HepG2 (cell line): ENCODE measurements at regions of chr21 and their contacts with region 1.

Region 1: DNA sequence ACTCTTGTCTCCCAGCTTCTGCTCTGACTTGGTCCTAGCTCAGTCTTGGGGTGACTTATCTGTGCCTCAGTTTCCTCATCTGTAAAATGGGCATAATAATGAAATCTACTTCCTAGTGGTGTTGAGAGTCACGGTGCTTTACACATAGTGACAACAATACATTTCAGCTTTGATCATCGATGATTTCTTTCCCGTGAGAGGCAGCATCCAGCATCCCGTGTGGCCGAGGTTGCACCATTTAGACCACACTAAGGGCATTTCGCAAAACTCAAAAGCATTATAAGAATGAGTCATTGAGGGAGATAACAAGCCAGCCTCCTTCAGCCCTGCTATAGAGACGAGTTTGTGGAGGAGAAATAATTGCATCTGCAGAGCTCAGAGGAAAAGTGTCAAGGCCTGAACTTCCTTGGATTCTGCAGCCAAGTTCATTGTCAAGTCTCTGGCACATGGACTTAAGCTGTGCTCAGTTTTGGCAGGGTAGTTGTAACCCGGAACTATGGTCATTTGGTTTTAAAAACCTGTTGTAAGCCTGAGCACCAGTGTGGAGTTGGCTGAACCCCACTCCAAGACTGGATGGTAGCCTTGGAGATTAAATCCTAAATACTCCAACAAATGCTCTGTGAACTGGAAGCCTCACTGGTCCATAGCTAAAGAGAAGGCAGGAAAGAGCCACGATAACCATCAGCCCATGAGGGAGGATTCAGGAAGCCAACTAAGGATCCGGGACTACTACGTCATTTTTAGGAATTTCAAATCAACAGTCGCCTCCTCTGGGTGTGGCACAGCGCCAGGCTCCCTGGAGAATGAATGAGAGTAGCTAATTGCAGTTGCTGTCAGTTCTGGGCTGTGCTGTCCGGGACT is 64.2 kb downstream of the TCP10L start:
- DNase-seq: no peak
- ATAC-seq: no peak
- H3K4me3 ChIP-seq: no peak overlapping the region
- H3K27ac ChIP-seq: no peak overlapping the region
- H3K4me1 ChIP-seq: peaks cover 39% of the 10 kb centered on the region
- H3K27me3 ChIP-seq: no peaks in the 10 kb centered on the region
- CTCF ChIP-seq: no peak
- EP300 ChIP-seq: no peak
- POLR2A ChIP-seq: no peak
- RAD21 ChIP-seq: no peak

Region 2: DNA sequence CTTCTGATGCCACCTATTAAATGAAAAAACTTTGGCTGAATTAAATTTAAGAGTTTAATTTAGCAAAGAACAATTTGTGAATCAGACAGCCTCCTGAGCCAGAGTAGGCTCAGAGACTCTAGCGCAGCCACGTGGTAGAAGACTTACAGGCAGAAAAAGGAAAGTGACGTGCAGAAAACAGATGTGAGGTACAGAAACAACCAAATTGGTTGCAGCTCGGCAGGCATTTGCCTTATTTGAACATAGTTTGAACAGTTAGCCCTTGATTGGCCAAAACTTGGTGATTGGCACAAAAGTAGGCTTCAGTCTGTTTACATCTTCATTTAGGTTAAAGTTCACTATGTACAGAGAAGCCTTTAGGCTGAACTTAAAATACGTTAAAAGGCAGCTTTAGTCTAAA is 41.3 kb after region 1 on chr21:
- CTCF ChIA-PET with region 1: no interaction called
- POLR2A ChIA-PET with region 1: no interaction called
- in situ Hi-C with region 1: no loop called
- intact Hi-C with region 1: no loop called
- DNase-seq: no peak
- ATAC-seq: no peak
- H3K4me3 ChIP-seq: no peak overlapping the region
- H3K27ac ChIP-seq: no peak overlapping the region
- H3K4me1 ChIP-seq: peaks cover 14% of the 10 kb centered on the region
- H3K27me3 ChIP-seq: no peaks in the 10 kb centered on the region
- CTCF ChIP-seq: peak; percentile 25; the same call in 1 of the 2 replicates
- EP300 ChIP-seq: no peak
- POLR2A ChIP-seq: no peak
- RAD21 ChIP-seq: no peak

Region 3: GRCh38 chr21:32592929-32593502 is 71.9 kb after region 1 on chr21:
- CTCF ChIA-PET with region 1: no interaction called
- POLR2A ChIA-PET with region 1: no interaction called
- in situ Hi-C with region 1: no loop called
- intact Hi-C with region 1: no loop called
- DNase-seq: peak; percentile 98
- ATAC-seq: peak; percentile 93
- H3K4me3 ChIP-seq: peak overlapping the region in 2 of 3 experiments; percentile 35 to 59; a peak in 3 of 6 replicates
- H3K27ac ChIP-seq: peak overlapping the region; percentile 84
- H3K4me1 ChIP-seq: peaks cover 69% of the 10 kb centered on the region
- H3K27me3 ChIP-seq: no peaks in the 10 kb centered on the region
- CTCF ChIP-seq: peak; percentile 23
- EP300 ChIP-seq: peak; percentile 71 to 97; a peak in 3 of 4 replicates
- POLR2A ChIP-seq: peak in 1 of 2 experiments; percentile 15; a peak in 1 of 4 replicates
- RAD21 ChIP-seq: peak; percentile 32; the same call in 1 of the 2 replicates

Region 4: GRCh38 chr21:32604464-32604863 is 83.4 kb after region 1 on chr21:
- CTCF ChIA-PET with region 1: no interaction called
- POLR2A ChIA-PET with region 1: no interaction called
- in situ Hi-C with region 1: no loop called
- intact Hi-C with region 1: loop called (anchors 10 kb)
- DNase-seq: no peak
- ATAC-seq: no peak
- H3K4me3 ChIP-seq: no peak overlapping the region
- H3K27ac ChIP-seq: no peak overlapping the region
- H3K4me1 ChIP-seq: peaks cover 5% of the 10 kb centered on the region
- H3K27me3 ChIP-seq: no peaks in the 10 kb centered on the region
- CTCF ChIP-seq: no peak
- EP300 ChIP-seq: no peak
- POLR2A ChIP-seq: no peak
- RAD21 ChIP-seq: no peak